Common myeloid progenitor, CD34-positive (primary cell): ENCODE measurements at regions of chr16 and their contacts with region 1.

Region 1: GRCh38 chr16:30534368-30535105 is at the start of gene ZNF747:
- DNase-seq: peak; percentile 85 to 91 (median 90)
- H3K4me3 ChIP-seq: peak within 1 kb of the TSS; percentile 61 to 92 (median 78)
- H3K27ac ChIP-seq: peak within 1 kb of the TSS; percentile 78 to 91
- H3K4me1 ChIP-seq: peaks cover 4 to 35% (median 29%) of the 10 kb centered on the region in 4 experiments
- H3K27me3 ChIP-seq: no peaks in the 10 kb centered on the region

Region 2: GRCh38 chr16:30429678-30430427 is 104.7 kb before region 1 on chr16 and contains the start of gene DCTPP1:
- CTCF ChIA-PET with region 1: interaction called, 10 read pairs
- POLR2A ChIA-PET with region 1: no interaction called
- DNase-seq: peak; percentile 100
- H3K4me3 ChIP-seq: peak within 1 kb of the TSS; percentile 36 to 89 (median 82)
- H3K27ac ChIP-seq: peak within 1 kb of the TSS; percentile 46 to 76
- H3K4me1 ChIP-seq: peaks cover 3 to 21% (median 16%) of the 10 kb centered on the region in 4 experiments
- H3K27me3 ChIP-seq: no peaks in the 10 kb centered on the region

Region 3: DNA sequence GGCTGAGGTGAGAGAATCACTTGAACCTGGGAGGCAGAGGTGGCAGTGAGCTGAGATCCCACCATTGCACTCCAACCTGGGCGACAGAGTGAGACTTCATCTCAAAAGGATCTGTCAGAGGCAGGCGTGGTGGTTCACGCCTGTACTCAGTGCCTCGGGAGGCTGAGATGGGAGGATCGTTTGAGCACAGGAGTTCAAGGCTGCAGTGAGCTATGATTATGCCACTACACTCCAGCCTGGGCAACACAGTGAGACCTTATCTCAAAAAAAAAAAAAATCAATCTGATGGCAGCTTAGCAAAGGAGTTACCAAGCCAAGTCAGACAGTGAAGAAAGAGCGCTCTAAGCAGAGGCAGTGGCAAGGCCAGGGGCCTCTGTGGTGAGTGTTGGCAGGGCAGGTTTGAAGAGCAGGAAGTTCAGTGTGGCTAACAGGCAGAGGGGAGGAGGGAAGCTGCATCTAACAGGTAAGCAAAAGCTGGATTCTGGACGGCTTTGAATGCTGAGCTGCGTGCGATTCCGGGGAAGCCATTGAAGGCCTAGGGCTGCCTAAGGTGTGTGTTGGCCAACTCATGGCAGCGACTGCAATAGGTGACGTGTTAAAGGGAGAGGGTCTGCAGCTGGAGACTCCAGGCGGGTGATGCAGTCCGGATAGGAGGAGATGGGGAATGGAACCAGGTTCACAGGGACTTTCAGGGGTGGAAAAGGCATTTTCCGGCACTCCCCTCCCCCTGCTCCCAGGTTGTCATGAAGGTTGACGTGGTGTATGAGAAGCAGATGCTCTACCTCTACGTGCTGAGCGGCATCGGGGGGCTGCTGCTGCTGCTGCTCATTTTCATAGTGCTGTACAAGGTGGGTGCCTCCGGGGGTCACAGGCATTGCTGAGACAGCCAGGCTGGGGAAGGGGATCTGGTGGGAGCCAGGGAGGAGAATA is 15.2 kb before region 1 on chr16:
- CTCF ChIA-PET with region 1: no interaction called
- POLR2A ChIA-PET with region 1: no interaction called
- DNase-seq: no peak
- H3K4me3 ChIP-seq: no peak overlapping the region
- H3K27ac ChIP-seq: no peak overlapping the region
- H3K4me1 ChIP-seq: no peaks in the 10 kb centered on the region
- H3K27me3 ChIP-seq: no peaks in the 10 kb centered on the region

Region 4: DNA sequence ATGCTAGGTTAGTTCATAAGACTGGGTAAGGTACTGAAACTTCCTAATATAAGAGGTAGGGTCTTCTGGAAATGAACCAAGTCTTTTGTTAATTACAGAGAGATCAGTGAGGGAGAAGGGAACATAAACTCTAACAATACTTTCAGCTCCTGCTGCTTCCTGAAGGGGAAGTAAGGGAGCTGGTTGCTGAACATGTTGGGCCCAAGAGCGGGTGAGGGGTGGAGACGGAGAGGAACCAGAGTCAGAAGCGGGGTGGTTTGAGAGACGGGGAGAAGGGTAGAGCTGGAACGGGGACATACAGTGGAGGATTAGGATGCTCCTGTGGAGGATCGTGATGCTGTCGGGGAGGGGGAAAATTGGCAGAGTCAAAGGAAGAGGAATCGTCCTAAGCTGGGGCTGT is 11.6 kb after region 1 on chr16:
- CTCF ChIA-PET with region 1: interaction called, 17 read pairs
- POLR2A ChIA-PET with region 1: no interaction called
- DNase-seq: peak in 2 of 3 donors; percentile 28 to 40
- H3K4me3 ChIP-seq: peak overlapping the region in 2 of 7 experiments; percentile 11 to 23
- H3K27ac ChIP-seq: no peak overlapping the region
- H3K4me1 ChIP-seq: peaks cover 0 to 15% (median 6%) of the 10 kb centered on the region in 4 experiments
- H3K27me3 ChIP-seq: no peaks in the 10 kb centered on the region